ENCODE measurements at regions of chr5 and their contacts with region 1.

Region 1: GRCh38 chr5:1594357-1595106 is 70.8 kb upstream of the LPCAT1 start:
- DNase-seq: peak; percentile 86 to 91 (median 88)
- ATAC-seq: peak; percentile 98
- H3K4me3 ChIP-seq: peak overlapping the region; percentile 59
- H3K27ac ChIP-seq: peak overlapping the region; percentile 59
- H3K4me1 ChIP-seq: peaks cover 0 to 13% of the 10 kb centered on the region in 2 experiments; a peak in 2 of 5 replicates
- H3K27me3 ChIP-seq: no peaks in the 10 kb centered on the region
- CTCF ChIP-seq: peak; percentile 56 to 61 (median 59)
- EP300 ChIP-seq: no peak
- POLR2A ChIP-seq: no peak; the same call in 1 of the 2 replicates
- RAD21 ChIP-seq: 0 out of 4 replicates have a peak, but pooled peaks of 1 of the 2 experiments have one; percentile 5

Region 2: GRCh38 chr5:217860-218456 is 1376.6 kb before region 1 on chr5 and contains the starts of genes CCDC127 and SDHA:
- CTCF ChIA-PET with region 1: no interaction called
- POLR2A ChIA-PET with region 1: no interaction called
- in situ Hi-C with region 1: loop called (anchors 5 kb)
- intact Hi-C with region 1: no loop called
- DNase-seq: peak; percentile 98 to 100 (median 100)
- ATAC-seq: peak; percentile 90
- H3K4me3 ChIP-seq: peak within 1 kb of the TSS; percentile 99
- H3K27ac ChIP-seq: peak within 1 kb of the TSS; percentile 93
- H3K4me1 ChIP-seq: peaks cover 11% of the 10 kb centered on the region in 2 experiments; a peak in 4 of 5 replicates
- H3K27me3 ChIP-seq: no peaks in the 10 kb centered on the region
- CTCF ChIP-seq: peak; percentile 49 to 56 (median 54)
- EP300 ChIP-seq: no peak
- POLR2A ChIP-seq: peak; percentile 87
- RAD21 ChIP-seq: no peak
- polyA plus RNA-seq, gene CCDC127: 4.4 to 4.5 TPM
- polyA plus RNA-seq, gene SDHA: 82.9 to 136 TPM

Region 3: DNA sequence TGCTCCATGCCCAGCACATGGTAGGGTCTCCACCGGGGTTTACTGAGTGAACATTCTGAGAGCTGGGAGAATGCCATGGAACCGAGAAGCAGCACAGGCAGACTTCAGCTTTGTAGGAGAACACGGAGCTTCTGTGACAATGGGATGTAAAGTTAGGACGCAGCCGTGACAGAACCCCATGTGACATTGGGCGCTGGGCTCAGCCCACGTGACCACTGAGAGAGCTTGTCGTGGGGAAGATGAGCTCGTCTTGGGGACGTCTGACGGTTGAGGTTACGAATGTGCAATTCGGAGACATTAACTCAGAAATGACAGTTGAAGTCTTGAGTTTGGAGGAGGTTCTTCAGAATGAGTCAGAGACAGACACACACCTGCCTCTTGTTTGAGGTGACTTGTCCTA is 1362.9 kb before region 1 on chr5:
- CTCF ChIA-PET with region 1: no interaction called
- POLR2A ChIA-PET with region 1: no interaction called
- in situ Hi-C with region 1: loop called (anchors 5 kb)
- intact Hi-C with region 1: no loop called
- DNase-seq: no peak
- ATAC-seq: no peak; the same call in 2 of the 3 replicates
- H3K4me3 ChIP-seq: no peak overlapping the region
- H3K27ac ChIP-seq: no peak overlapping the region
- H3K4me1 ChIP-seq: no peaks in the 10 kb centered on the region
- H3K27me3 ChIP-seq: no peaks in the 10 kb centered on the region
- CTCF ChIP-seq: no peak
- EP300 ChIP-seq: no peak
- POLR2A ChIP-seq: no peak
- RAD21 ChIP-seq: no peak

Region 4: GRCh38 chr5:1808439-1808838 is 213.9 kb after region 1 on chr5:
- CTCF ChIA-PET with region 1: no interaction called
- POLR2A ChIA-PET with region 1: no interaction called
- in situ Hi-C with region 1: no loop called
- intact Hi-C with region 1: no loop called
- DNase-seq: no peak
- ATAC-seq: no peak
- H3K4me3 ChIP-seq: no peak overlapping the region
- H3K27ac ChIP-seq: no peak overlapping the region
- H3K4me1 ChIP-seq: peaks cover 0 to 7% of the 10 kb centered on the region in 2 experiments; a peak in 1 of 5 replicates
- H3K27me3 ChIP-seq: no peaks in the 10 kb centered on the region
- CTCF ChIP-seq: no peak
- EP300 ChIP-seq: no peak
- POLR2A ChIP-seq: no peak
- RAD21 ChIP-seq: no peak

Measured in K562 (cell line).